CD4-positive, alpha-beta memory T cell (primary cell): ENCODE measurements at regions of chr11 and their contacts with region 1.

Region 1: DNA sequence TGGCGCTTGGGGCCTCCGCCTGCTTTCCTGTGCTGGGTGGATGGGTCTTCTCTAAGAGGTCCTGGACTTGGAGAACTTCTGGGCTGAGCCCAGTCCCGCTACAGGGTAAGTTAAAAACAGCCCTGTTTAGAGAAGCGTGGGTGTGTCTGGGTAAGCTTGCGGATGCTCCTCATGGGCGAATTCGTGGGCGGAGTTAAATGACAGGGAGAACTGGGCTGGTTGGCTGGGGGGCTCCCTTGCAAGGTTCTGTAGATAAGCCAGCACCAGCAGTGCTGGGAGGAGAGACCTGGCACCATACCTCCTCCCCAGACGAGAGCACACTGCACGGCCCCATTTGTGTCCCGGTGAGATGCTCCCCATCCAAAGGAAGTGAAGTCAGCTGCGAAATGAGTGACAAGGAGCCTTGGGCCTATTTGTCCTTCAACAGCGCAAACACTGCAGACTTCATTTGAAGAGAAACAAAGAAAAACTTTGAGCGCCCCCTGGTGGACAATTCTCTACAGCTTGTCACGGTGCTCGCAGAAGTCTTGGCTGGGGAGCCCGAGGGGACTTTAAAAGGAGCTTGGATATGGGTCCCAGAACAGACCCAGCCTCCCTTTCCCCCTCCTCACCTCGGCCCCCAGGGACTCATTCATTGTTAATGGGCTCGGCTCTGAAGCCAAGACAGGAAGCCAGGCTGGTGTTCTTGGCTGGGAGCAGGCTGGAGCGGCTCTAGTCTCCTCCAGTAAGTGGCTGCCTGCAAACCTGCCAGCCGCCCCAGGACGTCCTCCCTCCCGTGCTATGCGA is 39.5 kb downstream of the TP53I11 start:
- DNase-seq: peak; percentile 74 to 81 (median 78)
- H3K4me3 ChIP-seq: no peak overlapping the region
- H3K4me3 Mint-ChIP-seq: peak overlapping the region in 1 of 8 donors; percentile 29
- H3K27ac ChIP-seq: no peak overlapping the region
- H3K27ac Mint-ChIP-seq: peak overlapping the region in 6 of 7 donors; percentile 22 to 85 (median 55)
- H3K4me1 ChIP-seq: peaks cover 7% of the 10 kb centered on the region
- H3K4me1 Mint-ChIP-seq: peaks cover 4 to 11% (median 7%) of the 10 kb centered on the region in 4 donors
- H3K27me3 ChIP-seq: no peaks in the 10 kb centered on the region
- H3K27me3 Mint-ChIP-seq: no peaks in the 10 kb centered on the region

Region 2: GRCh38 chr11:44556735-44557409 is 354.4 kb before region 1 on chr11:
- CTCF ChIA-PET with region 1: interaction called, 42 read pairs
- POLR2A ChIA-PET with region 1: no interaction called
- intact Hi-C with region 1: loop called (anchors 1 kb)
- DNase-seq: peak; percentile 60 to 69 (median 61)
- H3K4me3 ChIP-seq: no peak overlapping the region
- H3K4me3 Mint-ChIP-seq: no peak overlapping the region
- H3K27ac ChIP-seq: no peak overlapping the region
- H3K27ac Mint-ChIP-seq: peak overlapping the region; percentile 54 to 86 (median 70)
- H3K4me1 ChIP-seq: peaks cover 21% of the 10 kb centered on the region
- H3K4me1 Mint-ChIP-seq: peaks cover 16 to 34% (median 27%) of the 10 kb centered on the region in 4 donors
- H3K27me3 ChIP-seq: no peaks in the 10 kb centered on the region
- H3K27me3 Mint-ChIP-seq: no peaks in the 10 kb centered on the region

Region 3: GRCh38 chr11:44611687-44612434 is 299.4 kb before region 1 on chr11:
- CTCF ChIA-PET with region 1: interaction called, 21 read pairs
- POLR2A ChIA-PET with region 1: no interaction called
- intact Hi-C with region 1: no loop called
- DNase-seq: peak; percentile 75 to 94 (median 77)
- H3K4me3 ChIP-seq: no peak overlapping the region
- H3K4me3 Mint-ChIP-seq: peak overlapping the region in 7 of 8 donors; percentile 22 to 70 (median 52)
- H3K27ac ChIP-seq: peak overlapping the region; percentile 53
- H3K27ac Mint-ChIP-seq: peak overlapping the region; percentile 83 to 96 (median 92)
- H3K4me1 ChIP-seq: peaks cover 100% of the 10 kb centered on the region
- H3K4me1 Mint-ChIP-seq: peaks cover 54 to 100% (median 80%) of the 10 kb centered on the region in 4 donors
- H3K27me3 ChIP-seq: no peaks in the 10 kb centered on the region
- H3K27me3 Mint-ChIP-seq: no peaks in the 10 kb centered on the region

Region 4: GRCh38 chr11:44658506-44658850 is 252.7 kb before region 1 on chr11:
- CTCF ChIA-PET with region 1: interaction called, 26 read pairs
- POLR2A ChIA-PET with region 1: no interaction called
- intact Hi-C with region 1: no loop called
- DNase-seq: peak in 4 of 5 donors; percentile 30 to 44 (median 32)
- H3K4me3 ChIP-seq: no peak overlapping the region
- H3K4me3 Mint-ChIP-seq: peak overlapping the region in 2 of 8 donors; percentile 27 to 66
- H3K27ac ChIP-seq: no peak overlapping the region
- H3K27ac Mint-ChIP-seq: peak overlapping the region in 2 of 7 donors; percentile 11 to 81
- H3K4me1 ChIP-seq: peaks cover 18% of the 10 kb centered on the region
- H3K4me1 Mint-ChIP-seq: peaks cover 19 to 38% (median 25%) of the 10 kb centered on the region in 4 donors
- H3K27me3 ChIP-seq: no peaks in the 10 kb centered on the region
- H3K27me3 Mint-ChIP-seq: no peaks in the 10 kb centered on the region

Region 5: DNA sequence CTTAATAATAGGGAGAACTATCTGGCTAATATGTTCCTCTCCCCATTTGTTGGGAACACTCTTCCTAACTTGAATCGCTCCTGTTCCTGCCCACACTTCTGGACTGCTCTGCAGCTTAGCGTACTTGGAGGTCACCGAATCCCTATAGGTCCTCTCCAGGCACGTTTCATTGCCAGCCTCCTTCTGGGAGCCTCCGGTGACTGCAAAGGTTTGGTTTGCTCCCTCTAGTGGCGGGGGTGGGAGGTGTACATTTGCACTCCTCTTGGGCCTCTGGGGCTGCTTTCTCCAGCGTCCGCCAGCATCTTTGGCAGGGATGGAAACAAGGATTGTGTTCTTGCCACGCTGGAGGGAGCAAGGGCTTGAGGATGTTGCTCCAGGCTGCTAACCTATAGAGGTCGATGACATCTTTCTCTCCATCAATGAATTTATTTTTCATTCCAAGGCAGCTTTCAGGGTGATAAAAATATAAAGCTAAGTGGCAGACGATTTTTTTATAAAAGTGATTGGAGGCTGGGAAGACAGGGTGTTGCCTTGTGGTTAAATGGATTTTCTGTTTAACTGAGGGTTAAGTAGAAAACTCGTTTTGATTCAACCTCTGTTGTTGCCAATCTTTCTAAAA is 135.7 kb before region 1 on chr11:
- CTCF ChIA-PET with region 1: interaction called, 11 read pairs
- POLR2A ChIA-PET with region 1: no interaction called
- intact Hi-C with region 1: loop called (anchors 2 kb)
- DNase-seq: peak; percentile 57 to 65 (median 58)
- H3K4me3 ChIP-seq: no peak overlapping the region
- H3K4me3 Mint-ChIP-seq: peak overlapping the region in 1 of 8 donors; percentile 29
- H3K27ac ChIP-seq: no peak overlapping the region
- H3K27ac Mint-ChIP-seq: peak overlapping the region in 2 of 7 donors; percentile 74 to 86
- H3K4me1 ChIP-seq: no peaks in the 10 kb centered on the region
- H3K4me1 Mint-ChIP-seq: peaks cover 22 to 63% (median 32%) of the 10 kb centered on the region in 4 donors
- H3K27me3 ChIP-seq: no peaks in the 10 kb centered on the region
- H3K27me3 Mint-ChIP-seq: no peaks in the 10 kb centered on the region

Region 6: DNA sequence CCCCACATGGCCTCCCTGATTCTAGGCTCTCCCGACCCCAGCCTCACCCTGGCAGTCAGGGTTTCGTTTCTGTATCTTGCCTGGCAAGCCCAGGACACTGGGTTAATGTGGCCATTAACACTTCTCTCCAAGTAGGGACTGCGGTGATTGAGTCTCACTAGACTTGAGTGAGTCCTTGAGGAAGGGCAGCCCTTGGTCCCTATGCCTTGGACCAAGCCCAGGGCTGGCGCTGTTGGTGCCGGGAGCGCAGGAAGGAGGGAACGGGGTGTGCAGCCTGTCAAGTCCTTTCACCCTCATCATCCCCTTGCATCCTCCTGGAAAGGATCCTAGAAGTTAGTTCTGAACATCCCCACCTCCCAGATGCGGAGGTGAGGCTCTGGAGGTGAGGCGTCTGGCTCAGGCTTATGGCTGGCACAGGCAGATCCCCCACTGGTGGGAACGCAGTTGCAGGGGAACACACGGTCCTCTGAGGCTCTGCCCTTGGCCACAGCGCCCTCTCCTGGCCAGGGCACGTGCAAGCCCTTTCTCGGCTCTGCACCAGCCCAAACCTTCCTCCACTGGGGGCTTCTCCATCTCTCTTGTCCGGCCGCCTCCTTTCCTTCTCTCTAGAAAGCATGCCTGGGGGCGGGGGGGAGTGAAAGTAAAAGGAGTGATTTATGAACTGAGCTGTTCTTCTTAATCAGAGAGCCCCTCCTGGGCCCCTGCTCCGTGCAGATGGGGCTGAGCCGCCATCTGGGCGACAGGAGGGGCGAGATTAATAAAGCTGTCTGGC is 17.2 kb before region 1 on chr11:
- CTCF ChIA-PET with region 1: interaction called, 12 read pairs
- POLR2A ChIA-PET with region 1: no interaction called
- intact Hi-C with region 1: no loop called
- DNase-seq: peak; percentile 50 to 56 (median 54)
- H3K4me3 ChIP-seq: no peak overlapping the region
- H3K4me3 Mint-ChIP-seq: no peak overlapping the region
- H3K27ac ChIP-seq: no peak overlapping the region
- H3K27ac Mint-ChIP-seq: peak overlapping the region in 1 of 7 donors; percentile 17
- H3K4me1 ChIP-seq: no peaks in the 10 kb centered on the region
- H3K4me1 Mint-ChIP-seq: peaks cover 2 to 18% (median 12%) of the 10 kb centered on the region in 4 donors
- H3K27me3 ChIP-seq: no peaks in the 10 kb centered on the region
- H3K27me3 Mint-ChIP-seq: no peaks in the 10 kb centered on the region

Region 7: GRCh38 chr11:44927174-44927661 is 16.0 kb after region 1 on chr11:
- CTCF ChIA-PET with region 1: interaction called, 33 read pairs
- POLR2A ChIA-PET with region 1: interaction called, 3 read pairs
- intact Hi-C with region 1: no loop called
- DNase-seq: peak in 4 of 5 donors; percentile 35 to 51 (median 38)
- H3K4me3 ChIP-seq: no peak overlapping the region
- H3K4me3 Mint-ChIP-seq: no peak overlapping the region
- H3K27ac ChIP-seq: no peak overlapping the region
- H3K27ac Mint-ChIP-seq: peak overlapping the region in 1 of 7 donors; percentile 31
- H3K4me1 ChIP-seq: no peaks in the 10 kb centered on the region
- H3K4me1 Mint-ChIP-seq: peaks cover 0 to 7% (median 0%) of the 10 kb centered on the region in 4 donors
- H3K27me3 ChIP-seq: no peaks in the 10 kb centered on the region
- H3K27me3 Mint-ChIP-seq: no peaks in the 10 kb centered on the region